CD8-positive, alpha-beta T cell (primary cell): ENCODE measurements at regions of chr19 and their contacts with region 1.

Region 1: DNA sequence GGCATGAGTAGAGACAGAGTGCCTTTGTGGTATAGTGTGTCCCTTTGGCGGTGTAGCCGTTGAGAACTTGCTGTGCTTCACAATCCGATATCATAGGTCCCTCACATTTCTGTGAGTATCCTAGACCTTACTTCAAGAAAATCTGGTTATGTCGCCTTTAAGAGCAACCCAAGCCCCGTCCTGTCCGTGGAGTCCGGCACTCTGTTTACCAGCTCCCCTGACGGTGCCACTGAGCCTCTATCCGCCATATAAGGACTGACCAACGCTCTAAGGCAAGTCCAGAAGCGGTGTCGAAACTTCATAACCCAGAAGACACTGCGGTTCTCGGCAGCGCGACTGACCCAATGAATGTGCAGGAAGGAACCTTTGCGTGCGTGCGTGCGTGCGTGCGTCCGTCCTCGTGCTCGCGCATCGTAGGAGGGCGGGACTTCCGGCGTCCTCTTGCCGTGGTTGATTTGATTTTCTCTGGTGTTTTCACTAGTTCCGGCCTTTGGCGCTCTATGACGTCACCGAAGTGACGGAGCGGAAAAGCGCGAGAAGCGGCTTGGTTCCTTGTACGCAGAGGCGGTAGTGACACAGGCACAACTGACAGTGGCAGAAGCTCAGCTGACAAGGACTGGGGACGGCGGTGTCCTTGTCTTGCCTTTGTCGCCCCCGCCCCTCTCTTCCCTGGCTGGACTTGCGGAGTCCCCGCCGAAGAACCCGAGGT is at the starts of genes TRAPPC2B and ZNF547:
- DNase-seq: peak; percentile 96 to 99 (median 99)
- ATAC-seq: peak; percentile 89
- H3K4me3 ChIP-seq: peak within 1 kb of the TSS; percentile 63 to 66
- H3K4me3 Mint-ChIP-seq: peak within 1 kb of the TSS; percentile 86
- H3K27ac ChIP-seq: peak within 1 kb of the TSS; percentile 81 to 95
- H3K27ac Mint-ChIP-seq: peak within 1 kb of the TSS; percentile 98
- H3K4me1 ChIP-seq: peaks cover 12% of the 10 kb centered on the region
- H3K4me1 Mint-ChIP-seq: peaks cover 18% of the 10 kb centered on the region
- H3K27me3 ChIP-seq: no peaks in the 10 kb centered on the region
- H3K27me3 Mint-ChIP-seq: no peaks in the 10 kb centered on the region
- CTCF ChIP-seq: no peak
- total RNA-seq, gene TRAPPC2B: 8.6 to 9.9 TPM
- total RNA-seq, gene ZNF547: 0.72 to 0.81 TPM

Region 2: DNA sequence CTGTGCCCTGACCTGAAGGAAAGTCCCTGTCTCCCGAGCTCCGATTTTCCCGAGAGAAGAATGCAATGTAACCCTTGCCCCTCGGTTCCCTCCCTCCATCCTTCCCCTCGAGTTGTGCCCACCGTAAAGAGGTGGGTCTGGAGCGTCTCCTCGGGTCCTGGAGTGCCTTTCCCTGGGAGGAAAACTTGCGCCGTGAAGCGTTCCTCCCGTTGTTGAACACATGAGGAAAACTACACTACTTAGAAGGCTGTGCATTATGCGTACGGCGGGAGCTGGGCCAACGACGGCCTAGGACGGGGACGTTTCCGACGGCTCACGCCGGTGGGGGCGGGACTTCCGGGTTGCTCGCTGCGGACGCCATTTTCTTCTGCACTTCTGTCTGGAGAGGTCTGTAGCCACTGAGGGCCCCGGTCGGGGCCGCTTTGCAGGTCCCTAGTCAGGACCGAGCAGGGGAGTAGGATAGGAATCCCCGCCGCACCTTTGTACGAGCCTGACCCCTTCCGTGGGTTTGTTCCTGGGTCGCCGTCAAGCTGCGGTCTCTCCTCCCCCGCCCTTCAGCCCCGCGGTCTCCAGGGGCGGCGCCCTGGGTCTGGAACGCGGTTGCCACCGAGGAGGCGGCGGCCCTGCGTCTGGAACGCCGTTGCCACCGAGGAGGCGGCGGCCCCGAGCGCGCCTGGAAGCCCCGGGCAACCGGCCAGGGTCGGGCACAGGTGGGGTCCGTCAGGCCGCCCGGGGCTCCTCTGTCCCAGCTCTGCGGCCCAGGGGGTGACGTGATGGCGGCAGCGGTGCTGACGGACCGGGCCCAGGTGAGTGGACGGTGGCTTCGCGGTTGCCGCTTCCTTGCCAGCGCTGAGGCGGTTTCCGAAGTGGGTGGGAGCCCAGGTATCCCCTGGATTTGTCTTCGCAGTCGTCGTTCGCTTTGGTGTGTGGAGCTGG is 171.7 kb before region 1 on chr19 and contains the start of gene ZNF264:
- CTCF ChIA-PET with region 1: no interaction called
- POLR2A ChIA-PET with region 1: no interaction called
- intact Hi-C with region 1: loop called in 1 of 2 experiments (anchors 5 kb)
- DNase-seq: peak; percentile 76 to 93 (median 90)
- ATAC-seq: peak; percentile 92
- H3K4me3 ChIP-seq: peak within 1 kb of the TSS; percentile 84
- H3K4me3 Mint-ChIP-seq: peak within 1 kb of the TSS; percentile 94
- H3K27ac ChIP-seq: peak within 1 kb of the TSS; percentile 85 to 90
- H3K27ac Mint-ChIP-seq: peak within 1 kb of the TSS; percentile 96
- H3K4me1 ChIP-seq: peaks cover 22% of the 10 kb centered on the region
- H3K4me1 Mint-ChIP-seq: peaks cover 40% of the 10 kb centered on the region
- H3K27me3 ChIP-seq: peaks cover 0 to 2% of the 10 kb centered on the region in 2 experiments
- H3K27me3 Mint-ChIP-seq: peaks cover 7% of the 10 kb centered on the region
- CTCF ChIP-seq: no peak
- total RNA-seq, gene ZNF264: 54.7 to 57.0 TPM

Region 3: DNA sequence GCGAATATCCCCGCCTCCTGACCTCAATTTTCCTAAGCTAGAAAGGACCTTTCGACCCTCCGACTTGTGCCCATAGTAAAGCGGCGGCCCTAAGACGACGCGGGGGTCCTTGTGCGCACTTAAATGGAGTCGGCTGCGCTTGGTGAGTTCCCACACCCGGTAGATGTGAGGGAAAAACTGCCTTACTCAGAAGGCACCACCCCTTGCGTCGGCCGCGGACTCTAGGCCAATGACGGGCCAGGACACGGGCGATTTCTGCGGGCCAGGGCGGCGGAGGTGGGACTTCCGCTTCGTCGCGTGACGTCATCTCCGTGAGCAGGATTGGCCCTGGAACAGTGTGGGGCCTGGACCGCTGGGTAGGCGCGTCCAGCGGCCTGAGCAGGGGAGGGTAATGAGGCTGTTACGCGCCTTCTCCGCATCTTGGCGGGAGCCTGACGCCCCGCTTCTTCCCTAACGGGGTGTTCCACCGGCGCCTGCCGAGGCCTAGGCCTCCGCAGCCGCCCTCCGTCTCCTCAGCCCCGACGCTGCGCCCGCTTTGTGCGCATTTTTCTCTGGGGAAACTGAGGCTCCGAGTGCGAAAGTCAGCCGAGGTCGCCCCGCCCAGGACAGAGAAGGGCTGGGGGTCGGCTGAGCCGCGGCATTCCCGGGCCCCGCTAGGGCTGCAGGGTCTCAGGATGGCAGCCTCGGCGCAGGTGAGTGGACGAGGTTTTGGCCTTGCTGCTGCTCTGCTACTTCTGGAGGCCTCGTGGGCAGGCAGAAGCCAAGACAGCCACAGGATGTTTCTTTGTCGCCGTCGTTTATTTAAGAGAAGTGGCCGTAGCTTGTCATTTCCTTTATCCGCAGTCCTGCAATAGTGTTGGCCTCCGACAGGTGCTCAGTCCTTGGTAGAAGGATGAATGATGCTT is 42.7 kb before region 1 on chr19 and contains the start of gene ZNF543:
- CTCF ChIA-PET with region 1: no interaction called
- POLR2A ChIA-PET with region 1: no interaction called
- intact Hi-C with region 1: loop called (anchors 1 kb)
- DNase-seq: peak; percentile 85 to 96 (median 91)
- ATAC-seq: peak; percentile 95
- H3K4me3 ChIP-seq: peak within 1 kb of the TSS; percentile 61 to 94
- H3K4me3 Mint-ChIP-seq: peak within 1 kb of the TSS; percentile 92
- H3K27ac ChIP-seq: peak within 1 kb of the TSS; percentile 78 to 94
- H3K27ac Mint-ChIP-seq: peak within 1 kb of the TSS; percentile 96
- H3K4me1 ChIP-seq: peaks cover 21% of the 10 kb centered on the region
- H3K4me1 Mint-ChIP-seq: peaks cover 32% of the 10 kb centered on the region
- H3K27me3 ChIP-seq: peaks cover 6 to 7% of the 10 kb centered on the region in 2 experiments
- H3K27me3 Mint-ChIP-seq: peaks cover 22% of the 10 kb centered on the region
- CTCF ChIP-seq: no peak
- total RNA-seq, gene ZNF543: 4.3 to 4.9 TPM

Region 4: GRCh38 chr19:57338877-57339276 is 24.3 kb before region 1 on chr19:
- CTCF ChIA-PET with region 1: no interaction called
- POLR2A ChIA-PET with region 1: no interaction called
- intact Hi-C with region 1: no loop called
- DNase-seq: no peak
- ATAC-seq: no peak
- H3K4me3 ChIP-seq: no peak overlapping the region
- H3K4me3 Mint-ChIP-seq: no peak overlapping the region
- H3K27ac ChIP-seq: no peak overlapping the region
- H3K27ac Mint-ChIP-seq: no peak overlapping the region
- H3K4me1 ChIP-seq: no peaks in the 10 kb centered on the region
- H3K4me1 Mint-ChIP-seq: no peaks in the 10 kb centered on the region
- H3K27me3 ChIP-seq: no peaks in the 10 kb centered on the region
- H3K27me3 Mint-ChIP-seq: no peaks in the 10 kb centered on the region
- CTCF ChIP-seq: no peak

Region 5: GRCh38 chr19:57410877-57411671 is 47.9 kb after region 1 on chr19 and contains the start of gene ZNF17:
- CTCF ChIA-PET with region 1: no interaction called
- POLR2A ChIA-PET with region 1: no interaction called
- intact Hi-C with region 1: loop called (anchors 1 kb)
- DNase-seq: peak; percentile 83 to 96 (median 91)
- ATAC-seq: peak; percentile 100
- H3K4me3 ChIP-seq: peak within 1 kb of the TSS; percentile 82 to 99
- H3K4me3 Mint-ChIP-seq: peak within 1 kb of the TSS; percentile 96
- H3K27ac ChIP-seq: peak within 1 kb of the TSS; percentile 67 to 83
- H3K27ac Mint-ChIP-seq: peak within 1 kb of the TSS; percentile 94
- H3K4me1 ChIP-seq: peaks cover 13% of the 10 kb centered on the region
- H3K4me1 Mint-ChIP-seq: peaks cover 35% of the 10 kb centered on the region
- H3K27me3 ChIP-seq: no peaks in the 10 kb centered on the region
- H3K27me3 Mint-ChIP-seq: no peaks in the 10 kb centered on the region
- CTCF ChIP-seq: no peak
- total RNA-seq, gene ZNF17: 15.5 to 18.3 TPM

Region 6: DNA sequence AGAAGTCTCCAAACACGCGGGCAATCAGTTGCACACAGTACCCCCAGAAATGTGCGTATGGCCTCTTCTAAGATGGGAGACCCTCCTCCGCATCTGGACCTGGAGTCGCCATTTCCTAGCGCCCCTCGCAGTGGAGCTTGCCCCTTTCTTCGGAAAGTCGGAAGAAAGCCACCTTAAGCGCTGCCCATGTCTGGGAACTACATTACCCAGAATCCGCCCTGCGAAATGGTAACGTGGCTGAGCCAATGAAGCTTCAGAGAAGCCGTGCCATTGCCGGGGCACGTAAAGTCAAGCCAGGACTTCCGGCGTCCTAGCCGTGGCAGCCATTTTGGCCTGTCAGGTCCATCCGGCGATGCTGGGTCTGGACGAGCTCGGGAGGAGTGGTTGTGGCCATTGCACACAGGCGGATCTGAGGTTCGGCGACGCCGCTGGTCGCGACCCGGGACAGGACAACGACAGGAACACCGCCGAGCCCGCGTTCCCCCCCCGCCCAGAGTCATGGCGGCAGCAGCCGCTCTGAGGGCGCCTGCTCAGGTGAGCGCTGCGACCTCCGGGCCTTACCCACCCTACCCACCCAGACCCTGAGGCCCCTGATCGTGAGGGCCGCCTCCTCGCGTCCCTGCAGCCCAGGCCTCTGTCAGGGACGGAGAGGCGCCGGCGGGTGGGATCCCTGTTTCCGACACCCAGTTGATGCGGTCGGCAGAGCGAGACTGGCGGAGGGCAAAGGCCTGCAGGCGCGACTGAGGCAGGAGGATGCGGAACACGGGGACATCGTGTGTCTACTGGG is 406.4 kb after region 1 on chr19 and contains the start of gene ZNF586:
- CTCF ChIA-PET with region 1: no interaction called
- POLR2A ChIA-PET with region 1: no interaction called
- intact Hi-C with region 1: loop called in 1 of 2 experiments (anchors 1 kb)
- DNase-seq: peak; percentile 64 to 94 (median 86)
- ATAC-seq: peak; percentile 99
- H3K4me3 ChIP-seq: peak within 1 kb of the TSS; percentile 73 to 90
- H3K4me3 Mint-ChIP-seq: peak within 1 kb of the TSS; percentile 94
- H3K27ac ChIP-seq: peak within 1 kb of the TSS; percentile 61 to 86
- H3K27ac Mint-ChIP-seq: peak within 1 kb of the TSS; percentile 97
- H3K4me1 ChIP-seq: peaks cover 17% of the 10 kb centered on the region
- H3K4me1 Mint-ChIP-seq: peaks cover 35% of the 10 kb centered on the region
- H3K27me3 ChIP-seq: no peaks in the 10 kb centered on the region
- H3K27me3 Mint-ChIP-seq: no peaks in the 10 kb centered on the region
- CTCF ChIP-seq: no peak
- total RNA-seq, gene ZNF586: 54.0 to 57.6 TPM